ENCODE measurements at regions of chr3 and their contacts with region 1.

Region 1: GRCh38 chr3:112734718-112735350 is 93.9 kb upstream of the CCDC80 start:
- DNase-seq: peak; percentile 85
- ATAC-seq: peak; percentile 70
- H3K4me3 Mint-ChIP-seq: no peak overlapping the region
- H3K27ac Mint-ChIP-seq: no peak overlapping the region
- H3K4me1 Mint-ChIP-seq: peaks cover 36% of the 10 kb centered on the region
- H3K27me3 Mint-ChIP-seq: no peaks in the 10 kb centered on the region
- CTCF ChIP-seq: peak; percentile 79

Region 2: GRCh38 chr3:112167758-112168157 is 567.1 kb before region 1 on chr3:
- CTCF ChIA-PET with region 1: no interaction called
- POLR2A ChIA-PET with region 1: no interaction called
- intact Hi-C with region 1: no loop called
- DNase-seq: no peak
- ATAC-seq: no peak
- H3K4me3 Mint-ChIP-seq: no peak overlapping the region
- H3K27ac Mint-ChIP-seq: no peak overlapping the region
- H3K4me1 Mint-ChIP-seq: no peaks in the 10 kb centered on the region
- H3K27me3 Mint-ChIP-seq: no peaks in the 10 kb centered on the region
- CTCF ChIP-seq: no peak

Region 3: GRCh38 chr3:112233081-112233480 is 501.8 kb before region 1 on chr3:
- CTCF ChIA-PET with region 1: no interaction called
- POLR2A ChIA-PET with region 1: no interaction called
- intact Hi-C with region 1: no loop called
- DNase-seq: no peak
- ATAC-seq: no peak
- H3K4me3 Mint-ChIP-seq: no peak overlapping the region
- H3K27ac Mint-ChIP-seq: no peak overlapping the region
- H3K4me1 Mint-ChIP-seq: peaks cover 3% of the 10 kb centered on the region
- H3K27me3 Mint-ChIP-seq: no peaks in the 10 kb centered on the region
- CTCF ChIP-seq: no peak

Region 4: DNA sequence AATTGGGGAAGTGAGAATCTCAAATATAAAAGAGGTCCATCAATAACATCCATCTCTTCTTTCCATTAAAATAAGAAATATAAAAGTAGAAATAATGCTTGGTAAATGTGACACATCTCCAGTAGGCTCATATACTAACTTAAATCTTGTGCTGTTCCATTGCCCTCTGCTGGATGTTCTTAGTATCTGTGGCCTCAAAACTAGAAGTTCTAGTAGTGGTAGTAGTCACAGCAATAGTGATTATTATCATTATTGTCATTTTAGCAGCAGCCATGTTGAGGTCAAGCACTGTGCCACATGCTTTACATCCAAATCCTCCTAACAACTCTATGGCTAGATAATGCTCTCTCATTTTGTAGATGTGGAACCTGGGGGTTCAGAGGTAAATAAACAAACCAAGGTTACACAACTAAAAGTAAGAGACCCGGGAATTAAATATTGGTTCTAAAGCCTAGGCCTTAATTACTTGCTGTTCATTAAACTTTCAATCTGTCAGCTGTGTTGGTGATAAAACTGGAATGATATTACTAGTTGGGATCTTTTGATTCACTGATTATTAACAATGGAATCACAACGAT is 215.3 kb before region 1 on chr3:
- CTCF ChIA-PET with region 1: no interaction called
- POLR2A ChIA-PET with region 1: no interaction called
- intact Hi-C with region 1: no loop called
- DNase-seq: peak; percentile 47
- ATAC-seq: peak; percentile 80
- H3K4me3 Mint-ChIP-seq: no peak overlapping the region
- H3K27ac Mint-ChIP-seq: peak overlapping the region; percentile 71
- H3K4me1 Mint-ChIP-seq: peaks cover 24% of the 10 kb centered on the region
- H3K27me3 Mint-ChIP-seq: no peaks in the 10 kb centered on the region
- CTCF ChIP-seq: peak; percentile 73

Region 5: DNA sequence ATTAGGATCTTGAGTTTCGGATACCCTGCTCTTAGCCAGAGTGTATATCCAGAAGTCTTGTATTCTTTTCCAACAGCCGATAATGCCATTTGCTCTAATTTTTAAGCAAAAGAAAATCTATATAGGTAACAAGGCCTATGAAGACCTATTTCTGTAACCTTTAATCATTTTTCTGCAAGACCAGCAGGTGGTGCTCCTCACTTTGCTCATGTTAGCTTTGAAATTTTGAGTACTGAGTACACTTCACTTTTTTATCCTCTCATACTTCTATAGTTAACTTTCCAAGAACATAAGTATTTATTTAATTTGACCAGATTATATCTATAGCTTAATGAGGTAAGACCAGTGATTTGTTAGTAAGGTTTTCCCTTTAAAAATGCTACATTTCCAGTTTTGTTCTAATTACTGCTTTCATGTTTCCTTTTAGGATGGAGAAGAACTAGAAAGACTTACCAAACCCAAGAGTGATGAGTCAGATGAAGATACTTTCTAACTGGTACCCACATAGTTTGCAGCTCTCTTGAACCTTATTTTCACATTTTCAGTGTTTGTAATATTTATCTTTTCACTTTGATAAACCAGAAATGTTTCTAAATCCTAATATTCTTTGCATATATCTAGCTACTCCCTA is 152.5 kb before region 1 on chr3:
- CTCF ChIA-PET with region 1: interaction called, 15 read pairs
- POLR2A ChIA-PET with region 1: no interaction called
- intact Hi-C with region 1: no loop called
- DNase-seq: peak; percentile 24
- ATAC-seq: peak; percentile 55
- H3K4me3 Mint-ChIP-seq: no peak overlapping the region
- H3K27ac Mint-ChIP-seq: no peak overlapping the region
- H3K4me1 Mint-ChIP-seq: peaks cover 4% of the 10 kb centered on the region
- H3K27me3 Mint-ChIP-seq: no peaks in the 10 kb centered on the region
- CTCF ChIP-seq: peak; percentile 43

Region 6: GRCh38 chr3:112642912-112643506 is 91.8 kb before region 1 on chr3:
- CTCF ChIA-PET with region 1: interaction called, 77 read pairs
- POLR2A ChIA-PET with region 1: interaction called, 3 read pairs
- intact Hi-C with region 1: loop called (anchors 5 kb)
- DNase-seq: peak; percentile 92
- ATAC-seq: peak; percentile 96
- H3K4me3 Mint-ChIP-seq: peak overlapping the region; percentile 38
- H3K27ac Mint-ChIP-seq: no peak overlapping the region
- H3K4me1 Mint-ChIP-seq: peaks cover 15% of the 10 kb centered on the region
- H3K27me3 Mint-ChIP-seq: peaks cover 17% of the 10 kb centered on the region
- CTCF ChIP-seq: peak; percentile 71

Region 7: DNA sequence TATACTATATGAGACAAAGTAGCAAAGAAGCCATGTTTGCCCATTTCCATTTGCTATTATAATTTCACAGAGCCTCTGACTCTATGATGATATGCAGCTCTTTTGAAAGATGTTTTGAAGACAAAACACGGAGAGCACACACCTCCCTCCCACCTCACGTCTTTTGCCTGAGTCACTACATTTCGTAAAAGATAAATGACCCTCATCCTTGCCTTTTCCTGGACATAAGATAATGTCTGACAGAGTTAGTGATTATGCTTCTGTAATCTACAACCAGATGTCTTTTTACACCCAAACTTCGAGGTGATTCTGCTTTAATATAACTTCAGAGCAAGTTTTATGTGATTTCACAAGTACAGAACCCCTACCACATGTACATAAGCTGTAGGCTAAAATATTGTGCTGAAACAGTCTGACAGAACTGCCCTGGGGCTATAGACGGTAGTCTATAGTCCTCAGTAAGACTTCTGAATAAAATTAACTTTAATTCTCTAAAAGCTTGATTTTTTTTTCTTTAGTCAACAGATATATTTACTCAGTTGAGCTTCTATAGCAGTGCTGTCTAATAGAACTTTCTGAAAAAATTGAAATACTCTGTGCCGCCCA is 11.9 kb after region 1 on chr3:
- CTCF ChIA-PET with region 1: interaction called, 44 read pairs
- POLR2A ChIA-PET with region 1: no interaction called
- intact Hi-C with region 1: no loop called
- DNase-seq: no peak
- ATAC-seq: no peak
- H3K4me3 Mint-ChIP-seq: no peak overlapping the region
- H3K27ac Mint-ChIP-seq: no peak overlapping the region
- H3K4me1 Mint-ChIP-seq: peaks cover 6% of the 10 kb centered on the region
- H3K27me3 Mint-ChIP-seq: no peaks in the 10 kb centered on the region
- CTCF ChIP-seq: no peak

Region 8: GRCh38 chr3:112814266-112814665 is 79.4 kb after region 1 on chr3:
- CTCF ChIA-PET with region 1: interaction called, 13 read pairs
- POLR2A ChIA-PET with region 1: no interaction called
- intact Hi-C with region 1: no loop called
- DNase-seq: no peak
- ATAC-seq: no peak
- H3K4me3 Mint-ChIP-seq: no peak overlapping the region
- H3K27ac Mint-ChIP-seq: no peak overlapping the region
- H3K4me1 Mint-ChIP-seq: peaks cover 3% of the 10 kb centered on the region
- H3K27me3 Mint-ChIP-seq: no peaks in the 10 kb centered on the region
- CTCF ChIP-seq: no peak

Region 9: DNA sequence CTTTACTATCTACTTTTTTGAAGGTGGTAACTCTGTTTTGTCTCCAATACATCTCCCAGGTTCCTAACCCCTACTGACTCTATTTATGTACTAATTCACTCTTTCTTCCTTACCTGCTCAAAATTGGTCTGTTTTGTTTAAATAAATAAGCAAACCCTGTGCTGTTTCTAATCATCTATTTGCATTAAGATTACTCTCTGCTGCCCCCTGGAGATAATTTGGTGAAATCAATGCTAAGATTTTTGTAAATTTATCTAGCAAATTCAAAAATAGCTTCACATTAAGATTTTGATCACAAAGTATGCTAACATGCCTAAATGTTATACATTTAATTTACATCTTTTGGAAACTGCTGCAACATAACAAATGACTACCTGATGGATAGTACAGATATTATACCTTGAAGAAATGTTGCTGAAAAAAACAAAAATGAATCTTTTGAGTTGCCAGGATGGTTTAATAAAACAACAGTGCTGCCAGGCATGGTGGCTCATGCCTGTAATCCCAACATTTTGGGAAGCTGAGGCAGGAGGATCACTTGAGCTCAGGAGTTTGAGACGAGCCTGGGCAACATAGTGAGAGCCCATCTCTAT is 244.5 kb after region 1 on chr3:
- CTCF ChIA-PET with region 1: interaction called, 85 read pairs
- POLR2A ChIA-PET with region 1: interaction called, 5 read pairs
- intact Hi-C with region 1: loop called (anchors 2 kb)
- DNase-seq: no peak
- ATAC-seq: peak; percentile 38
- H3K4me3 Mint-ChIP-seq: no peak overlapping the region
- H3K27ac Mint-ChIP-seq: no peak overlapping the region
- H3K4me1 Mint-ChIP-seq: peaks cover 60% of the 10 kb centered on the region
- H3K27me3 Mint-ChIP-seq: no peaks in the 10 kb centered on the region
- CTCF ChIP-seq: peak; percentile 88

Region 10: DNA sequence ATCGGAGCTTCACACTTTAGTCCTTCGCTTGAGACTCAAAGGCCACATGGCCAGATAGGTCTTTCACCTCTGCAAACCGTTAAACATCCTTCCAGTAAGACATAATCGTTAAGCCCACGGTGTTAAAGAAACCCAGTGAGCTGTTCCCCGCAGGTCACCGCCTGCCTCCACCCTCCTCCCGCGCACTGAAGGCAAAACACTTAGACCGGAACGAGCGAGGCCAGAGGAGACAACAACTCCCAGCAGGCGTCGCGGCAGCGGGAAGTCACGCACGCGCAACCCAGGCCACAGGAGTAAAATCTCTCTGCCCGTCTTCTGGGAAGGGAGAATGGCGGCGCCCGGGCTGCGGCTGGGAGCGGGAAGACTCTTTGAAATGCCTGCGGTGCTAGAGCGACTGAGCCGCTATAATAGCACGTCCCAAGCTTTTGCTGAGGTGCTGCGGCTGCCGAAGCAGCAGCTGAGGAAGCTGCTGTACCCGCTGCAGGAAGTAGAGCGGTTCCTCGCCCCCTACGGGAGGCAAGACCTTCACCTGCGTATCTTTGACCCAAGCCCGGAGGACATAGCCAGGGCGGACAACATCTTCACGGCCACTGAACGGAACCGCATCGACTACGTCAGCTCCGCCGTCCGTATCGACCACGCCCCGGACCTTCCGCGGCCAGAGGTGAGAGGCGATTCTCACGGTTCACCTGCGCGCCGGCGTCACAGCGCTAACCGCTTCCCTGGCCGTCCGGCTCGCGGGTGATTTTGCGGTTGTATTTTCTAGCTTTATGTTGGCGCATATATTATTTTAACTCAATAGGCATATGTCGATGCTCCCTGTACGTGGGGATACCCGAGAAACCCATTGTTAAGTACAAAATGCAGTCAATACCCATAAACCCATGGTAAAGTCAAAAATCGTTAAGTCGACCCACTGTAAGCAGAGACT is 256.1 kb after region 1 on chr3 and contains the start of gene GTPBP8:
- CTCF ChIA-PET with region 1: interaction called, 27 read pairs
- POLR2A ChIA-PET with region 1: interaction called, 4 read pairs
- intact Hi-C with region 1: no loop called
- DNase-seq: peak; percentile 92
- ATAC-seq: peak; percentile 94
- H3K4me3 Mint-ChIP-seq: peak within 1 kb of the TSS; percentile 89
- H3K27ac Mint-ChIP-seq: peak within 1 kb of the TSS; percentile 97
- H3K4me1 Mint-ChIP-seq: peaks cover 57% of the 10 kb centered on the region
- H3K27me3 Mint-ChIP-seq: no peaks in the 10 kb centered on the region
- CTCF ChIP-seq: no peak
- total RNA-seq, gene GTPBP8: 24.7 to 28.0 TPM